Ascending aorta (tissue), 2 donors: ENCODE measurements at regions of chr12 and their contacts with region 1.

Region 1: DNA sequence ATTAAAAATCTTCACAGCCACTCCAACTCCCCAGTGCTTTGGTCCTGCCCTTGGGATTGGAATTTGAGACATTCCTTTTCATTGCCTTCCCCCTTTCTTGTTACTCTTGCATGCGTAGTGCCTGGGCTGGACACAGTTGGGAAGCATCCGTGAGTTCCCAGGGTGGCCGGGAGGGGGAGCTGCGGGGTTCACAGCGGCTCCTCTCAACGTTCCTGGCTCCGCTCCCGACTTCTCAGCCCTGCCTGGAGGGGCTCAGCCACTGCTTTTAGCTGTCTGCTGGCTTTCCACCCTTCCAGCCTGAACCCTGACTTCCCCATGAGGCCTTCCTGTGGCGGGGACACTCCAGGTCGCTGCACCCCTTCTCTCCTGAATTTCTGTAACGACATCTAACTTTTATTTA is 3.2 kb downstream of the TEX52 start:
- DNase-seq: peak in 1 of 2 donors; percentile 84
- H3K4me3 ChIP-seq: no peak overlapping the region
- H3K27ac ChIP-seq: no peak overlapping the region
- H3K4me1 ChIP-seq: peaks cover 0 to 2% of the 10 kb centered on the region in 2 donors
- H3K27me3 ChIP-seq: no peaks in the 10 kb centered on the region
- CTCF ChIP-seq: peak; percentile 69 to 82 (median 82)

Region 2: DNA sequence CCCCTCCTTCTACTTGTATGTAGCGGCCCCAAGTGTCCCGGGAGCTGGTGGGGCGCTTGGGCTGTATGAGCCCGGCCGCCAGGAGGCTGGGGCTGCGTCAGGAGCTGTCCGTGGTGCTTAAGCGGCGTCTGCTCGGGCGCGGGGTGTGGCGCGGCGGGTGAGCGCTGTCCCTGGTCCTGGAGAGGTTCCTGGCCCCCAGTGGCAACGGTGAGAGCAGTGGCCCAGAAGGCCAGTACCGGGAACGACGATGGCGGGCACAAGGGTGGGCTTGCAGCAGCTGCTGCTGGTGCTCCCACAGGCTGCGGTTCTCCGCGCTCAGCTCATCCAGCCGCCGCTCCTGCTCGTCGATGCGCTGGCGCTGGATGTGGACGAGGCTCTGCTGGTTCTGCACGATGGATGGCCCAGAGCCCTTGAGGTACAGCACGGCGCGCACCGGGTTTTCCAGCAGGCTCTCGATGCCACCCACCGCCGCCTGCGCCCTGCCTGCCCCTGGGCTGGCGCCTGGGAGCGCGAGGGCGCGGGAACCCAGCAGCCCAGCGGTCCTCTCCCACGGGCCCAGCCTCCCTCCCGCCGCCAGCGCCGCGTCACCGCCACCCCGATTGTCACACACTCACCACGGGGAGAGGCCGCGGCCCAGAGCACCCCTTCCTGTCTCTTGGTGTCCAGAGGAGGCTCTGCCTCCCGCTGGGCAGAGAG is 100.8 kb before region 1 on chr12:
- intact Hi-C with region 1: no loop called
- DNase-seq: peak in 1 of 2 donors; percentile 77
- H3K4me3 ChIP-seq: no peak overlapping the region
- H3K27ac ChIP-seq: no peak overlapping the region
- H3K4me1 ChIP-seq: no peaks in the 10 kb centered on the region
- H3K27me3 ChIP-seq: no peaks in the 10 kb centered on the region
- CTCF ChIP-seq: no peak

Region 3: GRCh38 chr12:2944401-2945047 is 90.9 kb after region 1 on chr12:
- intact Hi-C with region 1: loop called (anchors 5 kb)
- DNase-seq: no peak
- H3K4me3 ChIP-seq: no peak overlapping the region
- H3K27ac ChIP-seq: no peak overlapping the region
- H3K4me1 ChIP-seq: no peaks in the 10 kb centered on the region
- H3K27me3 ChIP-seq: no peaks in the 10 kb centered on the region
- CTCF ChIP-seq: peak; percentile 57 to 72 (median 62)

Region 4: GRCh38 chr12:2974560-2974971 is 120.9 kb after region 1 on chr12:
- intact Hi-C with region 1: no loop called
- DNase-seq: no peak
- H3K4me3 ChIP-seq: peak overlapping the region in 1 of 2 donors; percentile 31
- H3K27ac ChIP-seq: peak overlapping the region in 1 of 2 donors; percentile 39
- H3K4me1 ChIP-seq: peaks cover 0 to 2% of the 10 kb centered on the region in 2 donors
- H3K27me3 ChIP-seq: no peaks in the 10 kb centered on the region
- CTCF ChIP-seq: no peak

Region 5: GRCh38 chr12:3041558-3042164 is 188.0 kb after region 1 on chr12:
- intact Hi-C with region 1: loop called (anchors 1 kb)
- DNase-seq: peak in 1 of 2 donors; percentile 77
- H3K4me3 ChIP-seq: no peak overlapping the region
- H3K27ac ChIP-seq: no peak overlapping the region
- H3K4me1 ChIP-seq: peaks cover 0 to 4% of the 10 kb centered on the region in 2 donors
- H3K27me3 ChIP-seq: no peaks in the 10 kb centered on the region
- CTCF ChIP-seq: peak; percentile 53 to 73 (median 64)